Activated CD4-positive, alpha-beta memory T cell treated with anti-CD3 and anti-CD28 coated beads for 36 hours (primary cell): ENCODE measurements at regions of chr3 and their contacts with region 1.

Region 1: GRCh38 chr3:35965908-35966307 is 326.6 kb downstream of the ARPP21 start:
- DNase-seq: no peak
- H3K4me3 Mint-ChIP-seq: no peak overlapping the region
- H3K27ac Mint-ChIP-seq: no peak overlapping the region
- H3K4me1 Mint-ChIP-seq: peaks cover 2% of the 10 kb centered on the region
- H3K27me3 Mint-ChIP-seq: no peaks in the 10 kb centered on the region

Region 2: GRCh38 chr3:36540888-36541518 is 575.1 kb after region 1 on chr3:
- CTCF ChIA-PET with region 1: no interaction called
- POLR2A ChIA-PET with region 1: no interaction called
- intact Hi-C with region 1: loop called (anchors 2 kb)
- DNase-seq: no peak
- H3K4me3 Mint-ChIP-seq: no peak overlapping the region
- H3K27ac Mint-ChIP-seq: no peak overlapping the region
- H3K4me1 Mint-ChIP-seq: no peaks in the 10 kb centered on the region
- H3K27me3 Mint-ChIP-seq: no peaks in the 10 kb centered on the region

Region 3: GRCh38 chr3:36700537-36701248 is 734.8 kb after region 1 on chr3:
- CTCF ChIA-PET with region 1: interaction called, 3 read pairs
- POLR2A ChIA-PET with region 1: no interaction called
- intact Hi-C with region 1: loop called (anchors 5 kb)
- DNase-seq: peak; percentile 61
- H3K4me3 Mint-ChIP-seq: no peak overlapping the region
- H3K27ac Mint-ChIP-seq: no peak overlapping the region
- H3K4me1 Mint-ChIP-seq: no peaks in the 10 kb centered on the region
- H3K27me3 Mint-ChIP-seq: no peaks in the 10 kb centered on the region